H1 (cell line): ENCODE measurements at regions of chr17 and their contacts with region 1.

Region 1: GRCh38 chr17:47895856-47896671 is at the start of gene SP2:
- DNase-seq: peak; percentile 100
- H3K4me3 ChIP-seq: peak within 1 kb of the TSS; percentile 85 to 99 (median 93)
- H3K27ac ChIP-seq: peak within 1 kb of the TSS; percentile 83
- H3K4me1 ChIP-seq: peaks cover 0 to 9% (median 4%) of the 10 kb centered on the region in 4 experiments; a peak in 6 of 7 replicates
- H3K27me3 ChIP-seq: no peaks in the 10 kb centered on the region; a peak in 1 of 7 replicates
- CTCF ChIP-seq: no peak; a peak in 1 of 4 replicates
- EP300 ChIP-seq: no peak
- POLR2A ChIP-seq: peak; percentile 53 to 75
- RAD21 ChIP-seq: no peak
- total RNA-seq, gene SP2: 11.0 and 13.8 TPM in 2 replicates

Region 2: GRCh38 chr17:47708863-47709541 is 187.1 kb before region 1 on chr17:
- CTCF ChIA-PET with region 1: no interaction called
- POLR2A ChIA-PET with region 1: no interaction called
- DNase-seq: peak in 1 of 2 experiments; percentile 67
- H3K4me3 ChIP-seq: peak overlapping the region; percentile 21 to 57 (median 29); a peak in 7 of 8 replicates
- H3K27ac ChIP-seq: no peak overlapping the region
- H3K4me1 ChIP-seq: peaks cover 0 to 9% (median 3%) of the 10 kb centered on the region in 4 experiments; a peak in 5 of 7 replicates
- H3K27me3 ChIP-seq: peaks cover 0 to 19% (median 5%) of the 10 kb centered on the region in 4 experiments; a peak in 4 of 7 replicates
- CTCF ChIP-seq: no peak
- EP300 ChIP-seq: no peak
- POLR2A ChIP-seq: no peak
- RAD21 ChIP-seq: no peak

Region 3: GRCh38 chr17:47882247-47882646 is 13.8 kb before region 1 on chr17:
- CTCF ChIA-PET with region 1: interaction called, 14 read pairs
- POLR2A ChIA-PET with region 1: interaction called, 11 read pairs
- DNase-seq: no peak
- H3K4me3 ChIP-seq: no peak overlapping the region
- H3K27ac ChIP-seq: no peak overlapping the region
- H3K4me1 ChIP-seq: peaks cover 0 to 20% (median 12%) of the 10 kb centered on the region in 4 experiments; a peak in 6 of 7 replicates
- H3K27me3 ChIP-seq: no peaks in the 10 kb centered on the region; a peak in 1 of 7 replicates
- CTCF ChIP-seq: no peak
- EP300 ChIP-seq: no peak
- POLR2A ChIP-seq: no peak
- RAD21 ChIP-seq: no peak